ENCODE measurements at regions of chr2 and their contacts with region 1.

Region 1: GRCh38 chr2:218301176-218301819 is 9.0 kb upstream of the TMBIM1 start:
- DNase-seq: peak; percentile 93
- ATAC-seq: peak; percentile 95
- H3K4me3 Mint-ChIP-seq: no peak overlapping the region
- H3K27ac Mint-ChIP-seq: no peak overlapping the region
- H3K4me1 Mint-ChIP-seq: peaks cover 7% of the 10 kb centered on the region
- H3K27me3 Mint-ChIP-seq: no peaks in the 10 kb centered on the region

Region 2: GRCh38 chr2:217953531-217953932 is 347.8 kb before region 1 on chr2:
- CTCF ChIA-PET with region 1: no interaction called
- POLR2A ChIA-PET with region 1: no interaction called
- intact Hi-C with region 1: no loop called
- DNase-seq: no peak
- ATAC-seq: no peak
- H3K4me3 Mint-ChIP-seq: no peak overlapping the region
- H3K27ac Mint-ChIP-seq: no peak overlapping the region
- H3K4me1 Mint-ChIP-seq: no peaks in the 10 kb centered on the region
- H3K27me3 Mint-ChIP-seq: no peaks in the 10 kb centered on the region

Region 3: GRCh38 chr2:218129458-218130135 is 171.7 kb before region 1 on chr2:
- CTCF ChIA-PET with region 1: no interaction called
- POLR2A ChIA-PET with region 1: no interaction called
- intact Hi-C with region 1: no loop called
- DNase-seq: no peak
- ATAC-seq: no peak
- H3K4me3 Mint-ChIP-seq: no peak overlapping the region
- H3K27ac Mint-ChIP-seq: no peak overlapping the region
- H3K4me1 Mint-ChIP-seq: peaks cover 9% of the 10 kb centered on the region
- H3K27me3 Mint-ChIP-seq: peaks cover 6% of the 10 kb centered on the region

Region 4: DNA sequence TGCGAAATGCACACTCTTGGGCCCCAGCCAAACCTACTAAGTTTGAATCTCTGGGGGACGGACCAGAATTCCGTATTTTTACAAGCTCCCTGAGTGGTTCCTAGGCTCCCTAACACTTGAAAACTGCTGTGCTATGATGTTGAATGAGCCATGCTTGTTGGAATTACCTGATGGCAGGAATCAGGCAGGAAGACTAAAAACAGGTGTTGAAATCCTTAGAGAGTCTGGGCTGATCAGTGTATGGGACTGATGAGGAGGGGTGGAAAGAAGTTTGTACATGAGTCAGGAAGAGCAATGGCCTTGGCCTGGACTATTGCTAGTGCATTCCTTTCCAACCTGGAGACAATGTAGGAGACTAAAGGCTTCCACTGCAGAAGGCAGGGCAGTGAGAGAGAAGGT is 15.9 kb after region 1 on chr2:
- CTCF ChIA-PET with region 1: interaction called, 12 read pairs
- POLR2A ChIA-PET with region 1: no interaction called
- intact Hi-C with region 1: no loop called
- DNase-seq: no peak
- ATAC-seq: no peak
- H3K4me3 Mint-ChIP-seq: no peak overlapping the region
- H3K27ac Mint-ChIP-seq: peak overlapping the region; percentile 78
- H3K4me1 Mint-ChIP-seq: peaks cover 41% of the 10 kb centered on the region
- H3K27me3 Mint-ChIP-seq: no peaks in the 10 kb centered on the region

Region 5: DNA sequence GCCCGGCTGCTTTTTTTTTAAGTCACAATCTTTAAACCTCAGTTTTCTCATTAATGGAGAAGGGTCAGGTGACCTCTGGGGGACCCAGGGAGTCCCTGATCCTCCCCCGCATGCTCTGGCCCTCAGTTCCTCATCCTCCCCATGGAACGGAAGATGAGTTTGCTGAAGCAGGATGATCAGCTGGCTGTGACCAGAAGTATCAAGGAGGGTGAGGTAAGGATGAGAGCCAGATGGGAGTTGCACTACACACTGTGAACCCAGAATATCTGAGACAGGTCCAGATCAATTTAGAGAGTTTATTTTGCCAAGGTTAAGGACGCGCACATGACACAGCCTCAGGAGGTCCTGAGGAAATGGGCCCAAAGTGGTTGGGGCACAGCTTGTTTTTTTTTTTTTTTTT is 59.1 kb after region 1 on chr2:
- CTCF ChIA-PET with region 1: interaction called, 64 read pairs
- POLR2A ChIA-PET with region 1: no interaction called
- intact Hi-C with region 1: loop called (anchors 1 kb)
- DNase-seq: no peak
- ATAC-seq: no peak
- H3K4me3 Mint-ChIP-seq: no peak overlapping the region
- H3K27ac Mint-ChIP-seq: no peak overlapping the region
- H3K4me1 Mint-ChIP-seq: no peaks in the 10 kb centered on the region
- H3K27me3 Mint-ChIP-seq: no peaks in the 10 kb centered on the region

Region 6: GRCh38 chr2:218466016-218466521 is 164.8 kb after region 1 on chr2:
- CTCF ChIA-PET with region 1: interaction called, 5 read pairs
- POLR2A ChIA-PET with region 1: no interaction called
- intact Hi-C with region 1: loop called (anchors 1 kb)
- DNase-seq: no peak
- ATAC-seq: no peak
- H3K4me3 Mint-ChIP-seq: no peak overlapping the region
- H3K27ac Mint-ChIP-seq: no peak overlapping the region
- H3K4me1 Mint-ChIP-seq: no peaks in the 10 kb centered on the region
- H3K27me3 Mint-ChIP-seq: no peaks in the 10 kb centered on the region

Region 7: GRCh38 chr2:218566296-218566695 is 265.0 kb after region 1 on chr2:
- CTCF ChIA-PET with region 1: no interaction called
- POLR2A ChIA-PET with region 1: no interaction called
- intact Hi-C with region 1: no loop called
- DNase-seq: no peak
- ATAC-seq: no peak
- H3K4me3 Mint-ChIP-seq: peak overlapping the region; percentile 96
- H3K27ac Mint-ChIP-seq: peak overlapping the region; percentile 100
- H3K4me1 Mint-ChIP-seq: peaks cover 59% of the 10 kb centered on the region
- H3K27me3 Mint-ChIP-seq: no peaks in the 10 kb centered on the region

Region 8: GRCh38 chr2:218582076-218582475 is 280.8 kb after region 1 on chr2:
- CTCF ChIA-PET with region 1: no interaction called
- POLR2A ChIA-PET with region 1: no interaction called
- intact Hi-C with region 1: no loop called
- DNase-seq: peak; percentile 11
- ATAC-seq: peak; percentile 100
- H3K4me3 Mint-ChIP-seq: no peak overlapping the region
- H3K27ac Mint-ChIP-seq: peak overlapping the region; percentile 60
- H3K4me1 Mint-ChIP-seq: peaks cover 46% of the 10 kb centered on the region
- H3K27me3 Mint-ChIP-seq: no peaks in the 10 kb centered on the region

Region 9: DNA sequence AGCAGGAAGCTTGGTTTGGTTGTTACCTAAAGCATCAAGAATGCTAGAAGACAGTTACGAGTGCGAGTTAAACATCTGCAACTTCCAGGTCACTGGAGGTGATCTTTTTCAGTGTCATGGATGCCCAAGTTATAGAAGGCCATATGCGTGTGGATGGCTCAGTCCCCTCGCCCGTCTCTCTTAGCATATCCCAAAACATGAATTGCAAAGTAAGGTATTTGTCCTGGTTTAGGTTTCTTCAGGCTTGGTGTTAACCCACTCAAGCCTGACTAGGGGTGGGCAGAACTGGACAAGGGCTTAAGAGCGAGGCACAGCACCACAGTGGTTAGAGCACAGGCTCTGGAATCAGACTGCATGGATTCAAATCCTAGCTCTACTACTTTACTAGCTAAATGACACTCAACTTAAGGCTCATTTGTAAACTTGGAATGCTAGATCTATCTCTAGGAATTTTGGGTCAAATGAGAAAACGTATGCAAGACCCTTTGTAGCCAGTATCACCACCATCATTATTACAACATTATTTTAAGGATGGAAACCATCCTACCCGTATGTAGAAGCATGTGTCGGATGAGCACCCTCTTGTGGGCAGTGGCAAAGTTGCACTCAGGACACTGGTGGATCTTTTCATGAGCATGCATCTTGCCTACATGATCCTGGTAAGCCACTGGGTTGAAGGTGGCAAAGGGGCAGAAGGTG is 346.9 kb after region 1 on chr2:
- CTCF ChIA-PET with region 1: no interaction called
- POLR2A ChIA-PET with region 1: no interaction called
- intact Hi-C with region 1: loop called in 1 of 2 experiments (anchors 1 kb)
- DNase-seq: peak; percentile 72
- ATAC-seq: peak; percentile 88
- H3K4me3 Mint-ChIP-seq: no peak overlapping the region
- H3K27ac Mint-ChIP-seq: no peak overlapping the region
- H3K4me1 Mint-ChIP-seq: peaks cover 12% of the 10 kb centered on the region
- H3K27me3 Mint-ChIP-seq: no peaks in the 10 kb centered on the region

Measured in activated CD4-positive, alpha-beta T cell treated with anti-CD3 and anti-CD28 coated beads for 36 hours (primary cell).